MCF 10A (cell line): ENCODE measurements at regions of chr16 and their contacts with region 1.

Region 1: DNA sequence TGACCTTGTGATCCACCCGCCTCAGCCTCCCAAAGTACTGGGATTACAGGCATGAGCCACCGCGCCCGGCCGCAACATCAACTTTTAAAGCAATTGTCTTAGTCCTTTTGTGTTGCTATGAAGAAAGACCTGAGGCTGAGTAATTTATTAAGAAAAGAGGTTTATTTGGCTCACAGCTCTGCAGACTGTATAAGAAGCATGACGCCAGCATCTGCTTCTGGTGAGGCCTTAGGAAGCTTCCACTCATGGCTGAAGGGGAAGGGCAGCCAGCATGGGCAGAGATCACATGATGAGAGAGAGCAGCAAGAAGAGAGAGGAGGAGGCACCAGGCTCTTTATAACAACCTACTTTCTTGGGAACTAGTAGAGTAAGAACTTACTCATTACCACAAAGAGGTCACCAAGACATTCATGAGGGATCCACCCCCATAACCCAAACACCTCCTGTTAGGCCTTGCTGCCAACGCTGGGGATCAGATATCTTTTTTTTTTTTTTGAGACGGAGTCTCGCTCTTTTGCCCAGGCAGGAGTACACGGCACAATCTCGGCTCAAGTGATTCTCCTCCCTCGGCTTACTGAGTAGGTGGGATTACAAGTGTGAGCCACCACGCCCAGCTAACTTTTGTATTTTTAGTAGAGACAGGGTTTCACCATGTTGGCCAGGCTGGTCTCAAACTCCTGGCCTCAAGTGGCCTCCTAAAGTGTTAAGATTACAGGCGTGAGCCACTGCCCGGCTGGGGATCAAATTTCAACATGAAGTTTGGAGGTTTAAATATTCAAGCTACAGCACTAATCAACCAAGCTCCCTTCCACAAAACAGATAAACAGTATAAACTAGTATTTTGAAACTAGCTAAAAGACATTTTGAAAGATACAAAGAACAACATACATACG is 21.4 kb upstream of the GPT2 start:
- DNase-seq: no peak
- H3K4me3 Mint-ChIP-seq: no peak overlapping the region
- H3K27ac Mint-ChIP-seq: peak overlapping the region; percentile 56
- H3K4me1 Mint-ChIP-seq: peaks cover 6% of the 10 kb centered on the region
- H3K27me3 Mint-ChIP-seq: no peaks in the 10 kb centered on the region
- CTCF ChIP-seq: no peak

Region 2: GRCh38 chr16:46774743-46775177 is 88.0 kb before region 1 on chr16:
- CTCF ChIA-PET with region 1: no interaction called
- POLR2A ChIA-PET with region 1: no interaction called
- intact Hi-C with region 1: no loop called
- DNase-seq: no peak
- H3K4me3 Mint-ChIP-seq: no peak overlapping the region
- H3K27ac Mint-ChIP-seq: no peak overlapping the region
- H3K4me1 Mint-ChIP-seq: no peaks in the 10 kb centered on the region
- H3K27me3 Mint-ChIP-seq: no peaks in the 10 kb centered on the region
- CTCF ChIP-seq: no peak

Region 3: DNA sequence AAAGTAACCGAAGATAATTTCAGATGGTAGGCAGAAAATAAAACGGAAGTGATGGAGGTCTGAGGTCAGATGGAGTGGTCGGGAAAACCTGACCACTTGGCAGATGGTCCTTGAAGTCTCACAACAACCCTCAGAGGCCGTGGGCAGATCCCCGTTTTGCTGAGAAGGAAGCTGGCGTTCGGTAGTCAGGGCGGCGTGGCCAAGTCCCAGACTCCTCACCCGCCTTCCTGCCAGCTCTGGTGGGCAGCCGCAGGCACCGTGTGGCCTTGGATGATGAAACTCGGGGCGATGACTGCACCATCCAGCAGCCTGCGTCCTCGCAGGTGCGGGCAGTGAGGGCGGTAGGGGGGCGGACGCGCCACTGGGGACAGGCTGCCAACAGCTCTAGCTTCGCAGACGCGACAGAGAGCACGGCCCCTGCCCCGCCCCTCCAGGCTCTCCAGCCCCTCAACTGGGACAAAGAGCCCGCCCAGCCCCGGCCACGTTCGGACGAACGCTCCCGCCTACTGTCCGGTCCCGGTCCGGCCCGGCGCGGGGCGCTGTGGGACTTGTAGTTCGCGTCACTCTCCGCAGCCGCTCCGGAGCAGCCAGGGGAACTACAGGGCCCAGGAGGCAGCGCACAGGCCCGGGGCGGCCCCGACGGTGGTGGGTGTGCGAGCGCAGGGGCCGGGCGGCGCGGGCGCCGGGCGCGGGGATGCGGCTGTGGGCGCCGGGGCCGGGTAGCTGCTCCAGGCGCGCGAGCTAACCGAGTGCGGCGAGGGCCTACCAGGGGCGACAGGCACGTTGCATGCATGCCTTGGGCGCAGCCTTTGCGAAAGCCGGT is 21.1 kb after region 1 on chr16 and contains the start of gene GPT2:
- CTCF ChIA-PET with region 1: interaction called, 14 read pairs
- POLR2A ChIA-PET with region 1: interaction called, 23 read pairs
- intact Hi-C with region 1: no loop called
- DNase-seq: peak; percentile 97
- H3K4me3 Mint-ChIP-seq: peak within 1 kb of the TSS; percentile 73
- H3K27ac Mint-ChIP-seq: peak within 1 kb of the TSS; percentile 90
- H3K4me1 Mint-ChIP-seq: peaks cover 26% of the 10 kb centered on the region
- H3K27me3 Mint-ChIP-seq: no peaks in the 10 kb centered on the region
- CTCF ChIP-seq: peak; percentile 24
- total RNA-seq, gene GPT2: 44.7 and 60.6 TPM in 2 replicates

Region 4: DNA sequence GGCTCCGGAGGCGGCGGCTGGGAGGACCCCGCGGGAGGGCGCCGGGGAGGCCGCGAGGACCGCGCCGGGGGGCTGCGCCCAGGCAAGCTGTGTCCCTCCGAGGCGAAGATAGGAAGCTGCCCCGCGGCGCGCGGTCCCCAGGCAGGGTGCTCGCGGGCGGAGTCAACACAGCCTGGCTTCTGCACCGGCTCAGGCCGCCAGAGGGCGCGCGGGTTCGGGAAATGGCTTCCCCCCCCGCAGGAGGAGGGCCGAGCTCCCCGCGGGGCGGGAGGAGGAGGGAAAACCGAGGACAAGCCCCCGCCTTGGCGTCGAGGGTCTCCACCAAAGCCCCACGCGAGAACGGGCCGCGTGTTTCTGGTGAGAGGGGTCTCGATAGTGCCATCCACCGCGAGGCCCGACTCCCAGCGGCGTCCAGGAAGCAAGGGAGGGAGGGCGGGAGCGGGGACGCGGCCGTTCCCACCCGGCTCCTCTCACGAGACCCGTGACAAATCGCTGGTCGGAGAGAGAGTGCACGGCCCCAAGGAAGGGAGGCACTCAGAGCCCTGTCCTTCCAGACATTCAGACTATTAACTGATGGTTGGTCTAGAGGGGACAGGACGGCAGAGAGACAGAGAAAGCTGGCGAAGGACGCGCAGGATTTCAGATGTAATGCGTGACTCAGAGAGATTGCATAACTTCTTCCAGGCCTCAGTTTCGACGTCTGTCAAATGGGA is 175.1 kb after region 1 on chr16:
- CTCF ChIA-PET with region 1: no interaction called
- POLR2A ChIA-PET with region 1: no interaction called
- intact Hi-C with region 1: no loop called
- DNase-seq: peak; percentile 78
- H3K4me3 Mint-ChIP-seq: peak overlapping the region; percentile 73
- H3K27ac Mint-ChIP-seq: no peak overlapping the region
- H3K4me1 Mint-ChIP-seq: peaks cover 5% of the 10 kb centered on the region
- H3K27me3 Mint-ChIP-seq: no peaks in the 10 kb centered on the region
- CTCF ChIP-seq: peak; percentile 89

Region 5: DNA sequence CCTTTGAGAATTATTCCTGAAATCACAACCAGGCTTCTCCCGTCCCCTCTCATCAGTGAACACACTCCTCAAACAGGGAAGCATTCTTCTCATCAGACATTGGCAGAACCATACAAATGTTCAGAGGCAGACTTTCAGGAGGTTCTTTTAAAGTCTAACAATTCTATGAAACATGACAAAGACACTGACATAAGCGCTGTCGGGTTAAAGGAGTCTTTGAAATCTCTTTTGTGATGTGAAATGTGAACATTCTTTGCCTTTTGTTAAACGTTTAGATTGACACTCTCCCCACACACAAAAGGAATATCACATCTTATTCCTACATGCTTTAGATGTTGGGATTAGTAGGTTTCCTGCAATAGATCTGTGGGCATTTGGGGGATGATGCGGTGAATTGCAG is 217.1 kb after region 1 on chr16:
- CTCF ChIA-PET with region 1: no interaction called
- POLR2A ChIA-PET with region 1: no interaction called
- intact Hi-C with region 1: no loop called
- DNase-seq: no peak
- H3K4me3 Mint-ChIP-seq: no peak overlapping the region
- H3K27ac Mint-ChIP-seq: no peak overlapping the region
- H3K4me1 Mint-ChIP-seq: no peaks in the 10 kb centered on the region
- H3K27me3 Mint-ChIP-seq: no peaks in the 10 kb centered on the region
- CTCF ChIP-seq: no peak

Region 6: GRCh38 chr16:47096297-47096696 is 233.5 kb after region 1 on chr16:
- CTCF ChIA-PET with region 1: no interaction called
- POLR2A ChIA-PET with region 1: no interaction called
- intact Hi-C with region 1: no loop called
- DNase-seq: no peak
- H3K4me3 Mint-ChIP-seq: no peak overlapping the region
- H3K27ac Mint-ChIP-seq: no peak overlapping the region
- H3K4me1 Mint-ChIP-seq: no peaks in the 10 kb centered on the region
- H3K27me3 Mint-ChIP-seq: no peaks in the 10 kb centered on the region
- CTCF ChIP-seq: no peak